CD4-positive, alpha-beta memory T cell (primary cell): ENCODE measurements at regions of chr9 and their contacts with region 1.

Region 1: GRCh38 chr9:113410207-113410864 is at the starts of genes C9orf43 and POLE3:
- DNase-seq: peak; percentile 94 to 97 (median 95)
- H3K4me3 ChIP-seq: peak within 1 kb of the TSS; percentile 65 to 88
- H3K4me3 Mint-ChIP-seq: peak within 1 kb of the TSS; percentile 95 to 100 (median 98)
- H3K27ac ChIP-seq: peak within 1 kb of the TSS; percentile 84
- H3K27ac Mint-ChIP-seq: peak within 1 kb of the TSS; percentile 99 to 100 (median 99)
- H3K4me1 ChIP-seq: peaks cover 27% of the 10 kb centered on the region
- H3K4me1 Mint-ChIP-seq: peaks cover 17 to 44% (median 33%) of the 10 kb centered on the region in 4 donors
- H3K27me3 ChIP-seq: no peaks in the 10 kb centered on the region
- H3K27me3 Mint-ChIP-seq: peaks cover 2 to 3% of the 10 kb centered on the region in 2 donors
- total RNA-seq, gene C9orf43: 0.86 to 0.87 TPM
- total RNA-seq, gene POLE3: 46.9 TPM

Region 2: GRCh38 chr9:113150670-113151611 is 259.4 kb before region 1 on chr9 and contains the start of gene SLC31A2:
- CTCF ChIA-PET with region 1: no interaction called
- POLR2A ChIA-PET with region 1: interaction called, 4 read pairs
- intact Hi-C with region 1: loop called (anchors 1 kb)
- DNase-seq: peak; percentile 80 to 85 (median 81)
- H3K4me3 ChIP-seq: peak within 1 kb of the TSS; percentile 47 to 76
- H3K4me3 Mint-ChIP-seq: peak within 1 kb of the TSS; percentile 83 to 87 (median 86)
- H3K27ac ChIP-seq: peak within 1 kb of the TSS; percentile 50
- H3K27ac Mint-ChIP-seq: peak within 1 kb of the TSS; percentile 51 to 84 (median 76)
- H3K4me1 ChIP-seq: peaks cover 29% of the 10 kb centered on the region
- H3K4me1 Mint-ChIP-seq: peaks cover 12 to 40% (median 30%) of the 10 kb centered on the region in 4 donors
- H3K27me3 ChIP-seq: no peaks in the 10 kb centered on the region
- H3K27me3 Mint-ChIP-seq: peaks cover 2 to 6% of the 10 kb centered on the region in 2 donors
- total RNA-seq, gene SLC31A2: 5.3 to 6.1 TPM

Region 3: GRCh38 chr9:113309204-113309813 is 101.0 kb before region 1 on chr9:
- CTCF ChIA-PET with region 1: interaction called, 5 read pairs
- POLR2A ChIA-PET with region 1: no interaction called
- intact Hi-C with region 1: loop called (anchors 1 kb)
- DNase-seq: peak in 4 of 5 donors; percentile 18 to 34 (median 26)
- H3K4me3 ChIP-seq: no peak overlapping the region
- H3K4me3 Mint-ChIP-seq: no peak overlapping the region
- H3K27ac ChIP-seq: no peak overlapping the region
- H3K27ac Mint-ChIP-seq: peak overlapping the region in 1 of 7 donors; percentile 48
- H3K4me1 ChIP-seq: no peaks in the 10 kb centered on the region
- H3K4me1 Mint-ChIP-seq: no peaks in the 10 kb centered on the region
- H3K27me3 ChIP-seq: no peaks in the 10 kb centered on the region
- H3K27me3 Mint-ChIP-seq: peaks cover 3% of the 10 kb centered on the region in 2 donors

Region 4: GRCh38 chr9:113376634-113377567 is 33.4 kb before region 1 on chr9 and contains the start of gene HDHD3:
- CTCF ChIA-PET with region 1: no interaction called
- POLR2A ChIA-PET with region 1: interaction called, 18 read pairs
- intact Hi-C with region 1: loop called (anchors 1 kb)
- DNase-seq: peak; percentile 78 to 81 (median 80)
- H3K4me3 ChIP-seq: peak within 1 kb of the TSS; percentile 57 to 92
- H3K4me3 Mint-ChIP-seq: peak within 1 kb of the TSS; percentile 88 to 93 (median 90)
- H3K27ac ChIP-seq: peak within 1 kb of the TSS; percentile 66
- H3K27ac Mint-ChIP-seq: peak within 1 kb of the TSS; percentile 74 to 96 (median 89)
- H3K4me1 ChIP-seq: peaks cover 13% of the 10 kb centered on the region
- H3K4me1 Mint-ChIP-seq: peaks cover 12 to 23% (median 17%) of the 10 kb centered on the region in 4 donors
- H3K27me3 ChIP-seq: no peaks in the 10 kb centered on the region
- H3K27me3 Mint-ChIP-seq: no peaks in the 10 kb centered on the region
- total RNA-seq, gene HDHD3: 29.9 to 32.8 TPM

Region 5: GRCh38 chr9:113578882-113579282 is 168.5 kb after region 1 on chr9:
- CTCF ChIA-PET with region 1: interaction called, 18 read pairs
- POLR2A ChIA-PET with region 1: interaction called, 61 read pairs
- intact Hi-C with region 1: loop called (anchors 1 kb)
- DNase-seq: peak; percentile 72 to 92 (median 81)
- H3K4me3 ChIP-seq: peak overlapping the region in 1 of 2 donors; percentile 47
- H3K4me3 Mint-ChIP-seq: peak overlapping the region; percentile 71 to 92 (median 82)
- H3K27ac ChIP-seq: peak overlapping the region; percentile 69
- H3K27ac Mint-ChIP-seq: peak overlapping the region; percentile 88 to 97 (median 96)
- H3K4me1 ChIP-seq: peaks cover 65% of the 10 kb centered on the region
- H3K4me1 Mint-ChIP-seq: peaks cover 57 to 88% (median 75%) of the 10 kb centered on the region in 4 donors
- H3K27me3 ChIP-seq: no peaks in the 10 kb centered on the region
- H3K27me3 Mint-ChIP-seq: no peaks in the 10 kb centered on the region